ENCODE measurements at regions of chr11 and their contacts with region 1.

Region 1: DNA sequence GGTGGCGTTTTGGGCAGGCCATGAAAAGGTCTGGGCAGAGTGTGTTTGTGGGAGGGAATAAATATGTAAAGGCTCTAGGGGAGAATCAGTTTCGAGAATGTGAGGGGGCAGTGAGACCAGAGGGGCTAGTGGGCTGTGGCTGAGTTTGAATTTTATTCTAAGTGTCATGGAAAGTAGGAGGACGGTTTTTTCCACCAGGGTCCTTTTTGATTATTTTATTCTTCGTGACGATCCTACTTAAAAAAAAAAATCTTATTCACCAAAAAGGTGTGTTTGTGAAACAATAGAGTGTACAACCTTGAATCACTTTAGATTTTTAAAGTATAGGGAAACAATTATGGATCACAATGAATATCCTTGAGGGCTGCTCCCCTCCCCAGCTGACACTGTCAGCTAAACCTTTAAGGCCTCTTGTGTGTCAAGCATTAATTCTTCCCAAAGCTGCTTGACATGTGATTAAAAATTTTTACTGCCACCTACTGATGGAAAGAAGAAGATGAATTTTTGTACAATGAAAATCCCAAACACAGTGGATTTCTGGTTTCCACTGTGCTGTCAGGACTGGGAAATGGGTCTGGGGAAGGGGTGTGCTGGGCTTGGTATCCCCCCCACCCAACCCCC is 107.5 kb upstream of the OR4B1 start:
- DNase-seq: peak; percentile 65 to 71
- ATAC-seq: peak; percentile 59 to 64
- H3K4me3 ChIP-seq: peak overlapping the region; percentile 34
- H3K27ac ChIP-seq: peak overlapping the region; percentile 82 to 89
- H3K4me1 ChIP-seq: peaks cover 74% of the 10 kb centered on the region
- CTCF ChIP-seq: peak; percentile 54
- EP300 ChIP-seq: no peak
- POLR2A ChIP-seq: no peak
- RAD21 ChIP-seq: peak; percentile 54 to 62; a peak in 4 of 5 replicates

Region 2: DNA sequence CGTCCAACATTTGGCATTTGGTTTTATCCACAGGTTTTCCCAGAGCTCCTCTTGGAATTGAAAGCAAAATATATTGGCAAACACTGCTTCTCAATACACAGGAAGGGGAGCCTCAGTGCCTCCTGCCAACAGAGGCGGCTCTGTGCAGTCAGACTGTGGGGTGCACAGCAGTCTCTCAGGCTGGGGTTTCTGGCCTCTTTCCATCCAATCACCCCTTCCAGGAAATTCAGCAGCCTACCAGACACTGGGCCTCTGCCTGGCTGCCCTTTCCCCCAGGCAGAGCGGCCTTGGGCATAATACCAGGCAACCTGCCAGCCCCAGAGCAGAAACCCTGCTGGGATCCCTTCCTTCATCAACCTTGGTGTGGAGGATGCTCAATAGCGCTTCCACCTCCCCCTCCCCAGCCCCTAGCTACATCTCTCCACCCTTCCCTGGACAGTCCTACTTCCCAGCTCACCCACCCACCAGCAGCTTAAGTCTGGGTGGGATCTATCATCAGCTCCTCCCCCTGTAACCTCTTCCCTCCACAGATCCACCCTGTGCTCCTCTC is 642.4 kb before region 1 on chr11:
- CTCF ChIA-PET with region 1: no interaction called
- POLR2A ChIA-PET with region 1: no interaction called
- DNase-seq: no peak
- ATAC-seq: peak in 1 of 2 experiments; percentile 41; a peak in 3 of 6 replicates
- H3K4me3 ChIP-seq: no peak overlapping the region
- H3K27ac ChIP-seq: peak overlapping the region in 1 of 2 experiments; percentile 58; a peak in 2 of 6 replicates
- H3K4me1 ChIP-seq: peaks cover 12% of the 10 kb centered on the region
- CTCF ChIP-seq: no peak
- EP300 ChIP-seq: no peak
- POLR2A ChIP-seq: no peak
- RAD21 ChIP-seq: no peak

Region 3: GRCh38 chr11:47967577-47968425 is 141.4 kb before region 1 on chr11:
- CTCF ChIA-PET with region 1: interaction called, 10 read pairs
- POLR2A ChIA-PET with region 1: no interaction called
- DNase-seq: no peak
- ATAC-seq: peak in 1 of 2 experiments; percentile 33; a peak in 1 of 6 replicates
- H3K4me3 ChIP-seq: no peak overlapping the region
- H3K27ac ChIP-seq: peak overlapping the region in 1 of 2 experiments; percentile 19; a peak in 3 of 6 replicates
- H3K4me1 ChIP-seq: peaks cover 10% of the 10 kb centered on the region; the same call in 1 of the 3 replicates
- CTCF ChIP-seq: no peak
- EP300 ChIP-seq: no peak
- POLR2A ChIP-seq: no peak
- RAD21 ChIP-seq: no peak

Region 4: DNA sequence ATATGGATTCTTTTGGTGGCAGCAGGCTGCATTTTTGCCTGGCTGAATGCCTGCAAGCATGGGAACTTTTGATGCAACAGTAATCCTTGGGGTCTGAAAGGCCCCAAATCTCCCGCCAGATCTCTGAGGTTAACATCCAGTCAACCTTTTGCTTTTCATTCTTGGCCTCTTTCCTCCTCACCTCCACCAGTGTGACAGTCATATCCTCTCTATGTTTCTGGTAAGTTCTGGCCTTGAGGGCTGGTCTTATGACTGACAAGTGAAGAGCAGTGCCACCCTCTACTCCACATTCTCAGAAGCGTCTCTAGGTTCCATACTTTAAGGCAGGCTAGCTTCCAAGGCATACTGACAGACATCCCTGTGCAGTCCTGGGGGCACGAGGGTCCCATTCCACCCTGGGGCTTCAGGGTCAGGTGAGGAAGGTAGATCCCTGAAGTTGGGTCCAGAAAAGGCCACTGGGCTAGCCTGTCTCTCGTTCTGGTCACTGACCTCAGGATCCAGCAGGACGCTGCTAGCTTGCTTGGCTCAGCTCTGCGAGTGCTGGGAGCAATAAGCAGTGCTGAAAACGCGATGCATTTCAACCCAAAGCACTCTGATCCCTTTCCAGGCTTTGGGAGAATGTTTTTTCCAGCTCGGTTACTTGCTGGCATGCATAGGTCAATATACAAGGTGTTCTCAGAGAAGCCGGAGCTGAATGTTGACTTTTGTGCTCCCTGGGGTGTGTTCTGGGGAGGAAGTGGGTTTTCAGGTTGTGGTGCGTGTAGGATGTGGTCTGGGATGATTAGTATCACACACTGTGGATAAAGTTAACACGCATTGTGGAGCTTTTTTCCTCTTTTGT is 53.6 kb before region 1 on chr11:
- CTCF ChIA-PET with region 1: interaction called, 11 read pairs
- POLR2A ChIA-PET with region 1: no interaction called
- DNase-seq: no peak
- ATAC-seq: peak in 1 of 2 experiments; percentile 9; a peak in 3 of 6 replicates
- H3K4me3 ChIP-seq: no peak overlapping the region
- H3K27ac ChIP-seq: peak overlapping the region; percentile 59 to 76; a peak in 5 of 6 replicates
- H3K4me1 ChIP-seq: peaks cover 75% of the 10 kb centered on the region
- CTCF ChIP-seq: no peak
- EP300 ChIP-seq: no peak
- POLR2A ChIP-seq: no peak
- RAD21 ChIP-seq: no peak

Region 5: DNA sequence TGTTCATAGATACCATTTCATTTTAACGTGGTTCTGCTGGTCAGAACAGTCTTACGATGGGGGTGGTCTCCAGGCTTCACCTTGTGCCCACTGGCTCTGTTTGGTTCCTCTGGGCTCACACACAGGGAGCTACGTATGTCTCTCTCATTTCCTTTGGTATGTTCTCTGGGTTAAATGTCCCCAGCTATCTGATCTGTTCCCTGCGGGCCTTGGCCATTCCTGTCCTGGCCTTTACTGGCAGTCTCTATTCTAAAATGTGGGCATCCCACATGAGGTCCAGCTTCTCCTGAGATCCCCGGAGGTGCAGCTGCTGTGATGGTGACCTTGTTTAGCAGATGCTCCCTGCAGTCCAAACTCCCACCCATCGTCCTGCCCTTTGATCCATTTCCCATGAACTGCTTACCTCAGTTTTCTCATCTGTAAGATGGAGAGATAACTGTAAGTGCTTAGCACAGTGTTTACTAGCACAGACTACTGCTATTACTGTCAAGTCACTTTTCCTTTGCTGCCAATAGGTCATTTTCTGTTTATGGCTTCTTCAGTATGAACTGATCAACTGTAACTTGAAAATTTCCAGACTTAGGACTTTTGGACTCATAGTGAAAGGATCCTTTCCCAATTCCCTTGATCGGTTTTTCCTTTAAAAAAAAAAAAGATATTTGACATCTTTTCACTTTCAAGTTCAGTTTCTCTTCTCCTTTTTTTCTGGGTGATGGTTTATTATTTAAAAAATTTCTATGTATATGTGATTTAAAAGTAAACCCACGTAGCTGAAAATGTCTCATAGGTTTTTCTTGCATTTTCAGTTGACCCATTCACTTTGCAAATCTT is 35.9 kb before region 1 on chr11:
- CTCF ChIA-PET with region 1: interaction called, 21 read pairs
- POLR2A ChIA-PET with region 1: no interaction called
- DNase-seq: no peak
- ATAC-seq: no peak
- H3K4me3 ChIP-seq: no peak overlapping the region
- H3K27ac ChIP-seq: no peak overlapping the region
- H3K4me1 ChIP-seq: peaks cover 25% of the 10 kb centered on the region
- CTCF ChIP-seq: no peak
- EP300 ChIP-seq: no peak
- POLR2A ChIP-seq: no peak
- RAD21 ChIP-seq: no peak

Region 6: DNA sequence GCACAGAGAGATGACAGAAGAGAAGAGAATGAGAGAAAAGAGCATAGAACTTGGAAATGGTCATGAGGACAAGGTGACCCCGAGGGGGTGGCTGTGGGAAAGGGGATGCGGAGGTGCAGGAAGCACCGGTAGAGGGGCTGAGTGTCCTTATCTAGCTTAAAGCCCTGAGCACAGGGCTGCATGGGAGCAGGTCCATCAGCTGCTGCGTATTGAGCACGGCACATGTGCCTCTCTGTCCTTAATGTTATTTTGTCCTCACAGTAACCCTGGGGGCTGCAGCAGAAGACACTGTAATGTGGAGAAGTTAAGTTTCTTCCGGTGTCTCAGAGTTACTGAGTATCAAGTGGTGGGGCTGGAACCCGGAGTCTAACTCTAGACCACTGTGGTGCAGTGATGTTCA is 13.1 kb after region 1 on chr11:
- CTCF ChIA-PET with region 1: interaction called, 33 read pairs
- POLR2A ChIA-PET with region 1: no interaction called
- DNase-seq: no peak
- ATAC-seq: no peak; a peak in 1 of 6 replicates
- H3K4me3 ChIP-seq: no peak overlapping the region
- H3K27ac ChIP-seq: no peak overlapping the region
- H3K4me1 ChIP-seq: no peaks in the 10 kb centered on the region
- CTCF ChIP-seq: no peak
- EP300 ChIP-seq: no peak
- POLR2A ChIP-seq: no peak
- RAD21 ChIP-seq: no peak